GM10248 (cell line): ENCODE measurements at regions of chr11 and their contacts with region 1.

Region 1: DNA sequence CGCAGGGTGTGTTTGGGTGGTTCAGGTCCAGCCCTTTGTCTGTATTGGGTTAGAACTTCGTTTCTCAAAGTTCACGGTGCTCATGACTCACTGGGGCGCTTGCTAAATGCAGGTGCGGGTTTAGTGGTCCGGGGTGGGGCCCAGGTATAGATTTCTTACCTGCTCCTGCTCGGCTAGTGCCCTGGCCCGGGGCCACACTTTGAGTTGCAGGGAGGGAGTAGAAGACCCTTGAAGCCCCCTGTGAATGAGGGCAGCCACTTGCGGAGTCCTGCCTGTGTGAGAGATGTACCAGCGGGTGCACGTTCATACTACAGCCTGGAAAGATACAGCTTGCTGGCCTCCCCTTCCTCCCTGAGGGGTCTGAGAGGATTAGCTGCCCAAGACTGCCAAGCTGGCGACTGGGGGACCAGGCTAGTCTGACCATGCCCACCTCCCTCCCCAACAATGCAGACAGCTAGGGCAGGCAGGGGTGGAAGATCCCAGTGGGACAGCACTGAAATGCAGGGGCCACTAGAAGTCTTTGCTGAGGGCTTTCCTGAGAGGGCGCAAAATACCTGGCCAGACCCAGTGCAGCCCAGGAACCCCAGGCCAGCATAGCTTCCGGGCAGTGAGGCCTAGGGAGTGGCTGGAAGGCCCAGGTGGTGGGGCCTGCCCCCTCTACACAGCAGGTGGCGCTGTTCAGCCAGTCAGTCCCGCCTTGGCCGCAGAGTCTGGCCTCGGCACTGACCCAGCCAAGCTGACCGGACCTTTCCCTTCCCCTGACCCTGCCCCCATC is 5.1 kb upstream of the MYRF start:
- DNase-seq: peak; percentile 89
- CTCF ChIP-seq: peak; percentile 94

Region 2: GRCh38 chr11:61509043-61510029 is 238.0 kb before region 1 on chr11:
- CTCF ChIA-PET with region 1: no interaction called
- POLR2A ChIA-PET with region 1: no interaction called
- DNase-seq: peak; percentile 79
- CTCF ChIP-seq: peak; percentile 32

Region 3: GRCh38 chr11:61598886-61599868 is 148.2 kb before region 1 on chr11:
- CTCF ChIA-PET with region 1: no interaction called
- POLR2A ChIA-PET with region 1: no interaction called
- DNase-seq: no peak
- CTCF ChIP-seq: no peak

Region 4: DNA sequence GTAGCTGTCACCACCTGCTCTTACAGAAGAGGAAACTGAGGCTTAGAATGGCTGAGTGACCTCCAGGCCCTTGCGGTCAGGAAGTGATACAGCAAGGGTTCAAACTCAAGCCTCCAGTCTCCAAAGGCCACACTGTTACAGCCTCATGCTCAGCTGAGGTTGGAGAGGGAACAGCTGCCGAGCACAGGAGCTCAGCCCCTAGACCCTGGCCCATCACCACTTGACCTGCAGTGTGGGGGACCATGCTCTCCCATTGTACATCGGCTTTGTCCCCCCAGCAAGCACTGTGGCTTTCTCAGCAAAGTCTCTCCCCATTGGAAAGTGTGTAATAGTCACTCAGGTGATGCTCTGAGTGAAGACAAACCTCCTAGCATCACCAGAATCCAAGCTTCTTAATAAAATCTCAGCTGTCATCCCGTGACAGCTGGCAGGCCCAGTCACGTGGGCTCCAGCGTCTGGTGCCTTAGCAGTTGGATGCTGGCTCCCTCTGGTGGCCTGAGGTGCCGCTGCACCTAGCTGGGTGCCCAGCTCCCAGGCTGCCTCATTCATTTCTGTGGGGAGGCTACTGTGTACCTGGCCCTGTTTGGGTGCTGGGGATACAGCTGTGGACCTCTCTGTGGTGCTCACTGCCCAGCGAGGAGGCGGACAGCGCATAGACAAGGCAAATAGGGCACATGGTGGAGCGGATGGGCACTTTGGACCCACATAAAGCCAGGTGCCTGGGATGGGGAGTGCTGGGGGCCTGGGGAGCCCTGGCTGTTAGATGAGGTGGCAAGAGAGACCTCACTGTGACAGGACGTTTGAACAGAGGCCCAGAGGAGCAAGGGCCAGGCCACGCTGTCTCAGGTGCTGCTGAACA is 14.0 kb before region 1 on chr11:
- CTCF ChIA-PET with region 1: interaction called, 38 read pairs
- POLR2A ChIA-PET with region 1: no interaction called
- DNase-seq: peak; percentile 95
- CTCF ChIP-seq: peak; percentile 99

Region 5: GRCh38 chr11:61764606-61765260 is 17.4 kb after region 1 on chr11:
- CTCF ChIA-PET with region 1: interaction called, 30 read pairs
- POLR2A ChIA-PET with region 1: no interaction called
- DNase-seq: no peak
- CTCF ChIP-seq: no peak

Region 6: DNA sequence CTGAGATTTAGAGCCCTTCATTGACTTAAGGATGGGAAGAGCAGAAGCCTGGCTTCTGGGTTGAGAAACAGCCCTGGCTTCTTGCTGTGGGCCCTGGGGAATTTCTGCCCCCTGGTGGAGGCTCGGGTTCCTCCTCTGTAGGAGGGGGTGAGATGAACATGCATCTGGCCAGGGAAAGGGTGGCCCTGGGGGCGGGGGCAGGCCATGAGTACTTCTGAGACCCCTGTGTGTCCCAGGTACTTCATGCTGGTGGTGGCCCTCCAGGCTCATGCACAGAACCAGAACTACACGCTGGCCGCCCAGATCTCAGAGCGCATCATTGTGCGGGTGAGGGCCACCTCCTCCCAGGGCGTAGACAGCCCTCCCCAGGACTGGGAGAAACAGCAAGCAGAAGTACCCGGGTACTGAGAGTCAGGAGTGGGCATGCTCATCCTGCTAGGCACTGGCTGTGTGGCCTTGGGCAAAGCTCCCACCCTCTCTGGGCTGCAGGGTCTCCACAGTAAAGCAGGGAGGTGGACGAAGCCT is 29.2 kb after region 1 on chr11:
- CTCF ChIA-PET with region 1: interaction called, 20 read pairs
- POLR2A ChIA-PET with region 1: no interaction called
- DNase-seq: peak; percentile 90
- CTCF ChIP-seq: peak; percentile 68

Region 7: DNA sequence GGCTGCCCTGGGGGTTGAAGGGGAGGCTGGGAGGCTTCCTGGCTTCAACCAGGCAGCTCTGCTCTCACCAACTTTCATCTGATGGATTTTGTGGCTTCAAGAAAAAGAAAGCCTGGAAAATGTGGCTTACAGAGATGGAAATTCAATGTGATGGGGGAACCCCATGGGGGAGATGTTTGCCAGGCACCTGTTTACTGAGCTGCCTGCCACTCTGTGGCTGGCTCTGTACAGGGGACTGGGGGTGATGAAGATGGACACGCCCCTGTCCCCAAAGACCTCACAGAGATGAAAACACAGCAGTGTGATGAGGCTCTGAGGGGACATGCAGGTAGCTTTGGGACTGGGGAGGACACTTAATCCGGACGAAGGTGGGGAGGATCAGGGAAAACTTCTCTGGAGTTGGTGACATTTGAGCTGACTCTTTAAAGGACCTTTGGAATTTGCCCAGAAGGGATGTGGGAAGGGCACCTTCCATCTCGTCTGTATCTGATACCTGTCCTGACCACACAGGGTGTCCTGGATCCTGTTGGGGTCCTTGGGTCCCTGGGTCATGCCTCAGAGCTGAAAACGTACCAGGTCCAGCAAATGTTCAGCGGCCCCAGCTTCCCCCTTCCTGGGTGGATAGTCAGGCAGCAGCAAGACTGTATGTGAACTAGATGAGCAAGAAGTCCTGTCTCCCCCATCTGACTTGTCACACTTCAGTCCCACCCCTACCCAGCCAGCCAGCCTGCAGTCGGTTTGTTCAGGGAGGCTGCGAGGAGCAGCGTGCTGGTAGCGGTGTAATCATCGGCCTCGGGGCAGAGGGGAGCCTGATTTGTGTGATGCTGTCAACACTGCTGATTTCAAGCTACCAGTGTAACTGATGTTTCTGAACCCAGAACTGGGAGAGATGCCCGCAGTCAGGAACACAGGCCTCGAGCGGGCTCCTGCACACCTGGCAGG is 35.2 kb after region 1 on chr11:
- CTCF ChIA-PET with region 1: interaction called, 91 read pairs
- POLR2A ChIA-PET with region 1: no interaction called
- DNase-seq: no peak
- CTCF ChIP-seq: no peak

Region 8: DNA sequence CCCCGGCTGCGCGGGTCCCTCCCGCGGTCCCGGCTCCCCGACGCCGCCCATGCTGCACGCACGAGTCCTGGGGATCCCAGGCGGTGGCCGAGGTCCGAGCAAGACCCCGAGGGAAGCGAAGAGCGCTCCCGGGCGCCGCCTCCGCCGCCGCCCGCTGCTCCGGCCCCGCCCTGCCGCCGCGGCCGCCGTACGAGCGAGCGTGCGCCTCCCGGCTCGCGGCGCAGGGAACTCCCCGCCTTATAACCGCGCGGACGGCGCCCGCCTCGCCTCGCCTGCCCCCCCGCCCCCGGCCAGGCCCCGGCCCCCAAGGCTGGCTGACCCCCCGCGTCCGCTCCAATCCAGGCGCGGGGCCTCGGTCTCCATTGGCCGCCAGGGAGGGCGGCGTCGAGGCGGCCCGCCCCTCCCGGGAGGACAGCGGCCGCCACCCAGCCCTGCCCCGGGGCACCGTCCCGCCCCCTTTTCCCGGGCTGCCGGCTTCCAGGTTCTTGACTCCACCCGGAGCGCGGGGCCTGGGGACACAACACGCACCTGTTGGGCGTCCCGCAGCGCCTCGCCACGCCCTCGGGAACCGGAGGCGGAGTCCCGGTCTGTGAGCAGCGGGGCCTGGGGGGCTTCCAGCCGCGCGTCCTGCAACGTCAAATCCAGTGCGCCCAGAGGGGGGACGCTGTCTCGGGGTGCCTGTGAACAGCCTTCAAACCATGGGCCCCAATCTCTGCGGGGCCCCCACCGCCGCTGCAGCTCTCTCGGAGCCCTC is 144.1 kb after region 1 on chr11 and contains the start of gene FADS3:
- CTCF ChIA-PET with region 1: no interaction called
- POLR2A ChIA-PET with region 1: no interaction called
- DNase-seq: peak; percentile 84
- CTCF ChIP-seq: no peak